GM12878 (cell line): ENCODE measurements at regions of chr1 and their contacts with region 1.

Region 1: DNA sequence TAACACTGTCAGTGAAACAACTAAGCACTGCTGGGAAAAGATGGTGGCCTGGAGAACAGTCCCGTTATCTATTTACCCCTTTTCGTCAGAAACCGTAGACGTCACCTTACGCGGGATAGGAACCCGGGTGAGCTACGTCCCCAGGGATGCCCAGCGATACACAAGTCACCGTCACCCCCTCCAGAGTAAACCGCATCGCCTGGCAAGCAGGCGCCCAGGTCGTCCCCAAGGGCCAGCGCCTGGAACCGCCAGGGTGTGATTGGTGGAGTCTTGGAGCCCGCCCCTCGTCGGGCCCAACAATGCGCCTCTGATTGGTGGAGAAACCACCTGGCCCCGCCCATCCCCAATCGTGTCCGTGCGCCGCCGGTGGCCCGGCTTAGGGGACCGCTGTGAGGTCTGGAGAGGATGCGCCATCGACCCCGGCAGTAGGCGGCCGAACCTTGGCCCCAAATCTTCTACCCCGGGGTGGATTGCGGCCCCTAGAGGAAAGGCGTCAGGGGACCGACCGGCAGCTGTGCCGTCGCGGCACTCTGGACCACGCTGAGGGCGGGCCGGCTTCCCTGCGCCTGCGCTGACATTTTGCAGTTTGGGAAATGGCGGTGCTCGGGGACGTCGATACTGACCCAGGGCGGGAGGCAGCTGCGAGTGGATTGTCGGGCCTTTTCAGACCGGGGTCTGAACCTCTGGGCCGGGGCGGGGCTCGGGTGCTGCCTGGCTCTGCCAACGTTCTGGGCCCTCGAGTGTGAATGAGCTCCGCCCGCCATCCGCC is 34.4 kb downstream of the SLC2A1 start:
- DNase-seq: peak; percentile 72
- ATAC-seq: peak; percentile 95
- H3K4me3 ChIP-seq: peak overlapping the region; percentile 71
- H3K27ac ChIP-seq: peak overlapping the region; percentile 78
- H3K4me1 ChIP-seq: peaks cover 9% of the 10 kb centered on the region
- H3K27me3 ChIP-seq: no peaks in the 10 kb centered on the region
- CTCF ChIP-seq: peak; percentile 4 to 17 (median 5); a peak in 2 of 6 replicates
- EP300 ChIP-seq: peak in 1 of 2 experiments; percentile 30; a peak in 1 of 4 replicates
- POLR2A ChIP-seq: peak; percentile 87
- RAD21 ChIP-seq: no peak

Region 2: GRCh38 chr1:42777852-42778251 is 146.4 kb before region 1 on chr1:
- CTCF ChIA-PET with region 1: interaction called, 18 read pairs
- POLR2A ChIA-PET with region 1: no interaction called
- RAD21 ChIA-PET with region 1: interaction called, 16 read pairs
- SMC1A ChIA-PET with region 1: interaction called, 21 read pairs
- in situ Hi-C with region 1: no loop called
- intact Hi-C with region 1: no loop called
- DNase-seq: no peak
- ATAC-seq: peak; percentile 77
- H3K4me3 ChIP-seq: no peak overlapping the region
- H3K27ac ChIP-seq: no peak overlapping the region
- H3K4me1 ChIP-seq: peaks cover 5% of the 10 kb centered on the region; the same call in 1 of the 2 replicates
- H3K27me3 ChIP-seq: no peaks in the 10 kb centered on the region
- CTCF ChIP-seq: peak; percentile 69 to 76 (median 71)
- EP300 ChIP-seq: no peak
- POLR2A ChIP-seq: no peak
- RAD21 ChIP-seq: peak; percentile 85

Region 3: DNA sequence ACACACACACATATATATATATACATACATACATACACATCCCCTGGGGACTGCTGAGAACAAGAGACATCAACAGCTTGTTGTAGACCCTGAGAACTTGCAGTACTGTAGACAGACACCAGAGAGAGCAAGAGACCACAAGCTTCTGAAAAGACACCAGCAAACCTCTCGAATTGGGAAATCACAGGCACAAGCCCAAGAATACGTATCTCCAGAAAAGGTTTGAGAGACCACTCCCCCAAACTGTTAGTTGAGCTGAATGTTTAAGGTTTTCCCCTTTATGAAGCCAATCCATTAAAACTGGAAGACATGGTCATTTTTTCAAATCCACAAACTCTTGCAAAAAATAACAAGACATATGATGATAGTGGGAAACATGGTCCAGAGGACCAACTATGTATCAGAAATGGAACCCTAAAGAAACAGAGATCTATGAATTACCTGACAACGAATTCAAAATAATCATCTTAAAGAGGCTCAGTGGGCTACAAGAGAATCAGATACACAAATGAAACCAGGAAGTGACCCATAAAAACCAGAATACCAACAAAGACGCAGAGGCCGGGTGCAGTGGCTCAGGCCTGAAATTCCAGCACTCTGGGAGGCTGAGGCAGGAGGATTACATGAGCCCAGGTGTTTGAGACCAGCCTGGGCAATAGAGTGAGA is 10.7 kb before region 1 on chr1:
- CTCF ChIA-PET with region 1: interaction called, 27 read pairs
- POLR2A ChIA-PET with region 1: no interaction called
- RAD21 ChIA-PET with region 1: interaction called, 36 read pairs
- SMC1A ChIA-PET with region 1: interaction called, 29 read pairs
- in situ Hi-C with region 1: no loop called
- intact Hi-C with region 1: no loop called
- DNase-seq: peak; percentile 64
- ATAC-seq: peak; percentile 88
- H3K4me3 ChIP-seq: no peak overlapping the region
- H3K27ac ChIP-seq: no peak overlapping the region
- H3K4me1 ChIP-seq: no peaks in the 10 kb centered on the region
- H3K27me3 ChIP-seq: no peaks in the 10 kb centered on the region
- CTCF ChIP-seq: peak; percentile 72 to 76 (median 74)
- EP300 ChIP-seq: no peak
- POLR2A ChIP-seq: no peak
- RAD21 ChIP-seq: peak; percentile 91

Region 4: DNA sequence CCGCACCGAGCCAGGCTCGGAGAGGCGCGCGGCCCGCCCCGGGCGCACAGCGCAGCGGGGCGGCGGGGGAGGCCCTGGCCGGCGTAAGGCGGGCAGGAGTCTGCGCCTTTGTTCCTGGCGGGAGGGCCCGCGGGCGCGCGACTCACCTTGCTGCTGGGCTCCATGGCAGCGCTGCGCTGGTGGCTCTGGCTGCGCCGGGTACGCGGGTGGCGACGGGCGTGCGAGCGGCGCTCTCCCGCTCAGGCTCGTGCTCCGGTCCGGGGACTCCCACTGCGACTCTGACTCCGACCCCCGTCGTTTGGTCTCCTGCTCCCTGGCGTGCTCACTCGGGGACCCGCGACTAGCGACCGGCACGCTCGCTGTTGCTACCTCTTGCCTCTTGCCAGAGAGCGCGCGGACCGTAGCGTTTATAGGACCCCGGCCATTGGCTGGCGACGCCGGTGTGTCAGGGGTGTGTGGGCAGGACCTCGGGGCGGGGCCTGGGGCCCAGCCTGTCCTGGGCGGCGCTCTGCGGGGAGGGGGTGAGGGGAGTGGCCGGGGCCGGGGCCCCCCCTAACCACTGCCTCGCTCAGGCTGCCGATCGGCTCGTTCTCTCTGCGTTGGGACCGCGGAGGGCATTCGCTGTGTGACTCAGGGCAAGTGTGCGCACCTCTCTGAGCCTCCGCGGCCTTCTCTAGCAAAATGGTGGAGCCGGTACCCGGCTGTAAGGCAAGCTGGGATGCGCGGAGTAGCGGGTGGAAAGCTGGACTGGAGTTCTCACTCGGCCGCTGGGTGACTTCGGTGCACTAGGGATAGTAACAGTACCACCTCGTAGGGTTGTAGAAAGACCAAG is 34.4 kb after region 1 on chr1 and contains the start of gene SLC2A1:
- CTCF ChIA-PET with region 1: interaction called, 13 read pairs
- POLR2A ChIA-PET with region 1: interaction called, 9 read pairs
- RAD21 ChIA-PET with region 1: interaction called, 15 read pairs
- SMC1A ChIA-PET with region 1: interaction called, 54 read pairs
- in situ Hi-C with region 1: loop called (anchors 5 kb)
- intact Hi-C with region 1: loop called (anchors 5 kb)
- DNase-seq: peak; percentile 79
- ATAC-seq: peak; percentile 88
- H3K4me3 ChIP-seq: peak within 1 kb of the TSS; percentile 88
- H3K27ac ChIP-seq: peak within 1 kb of the TSS; percentile 78
- H3K4me1 ChIP-seq: peaks cover 38% of the 10 kb centered on the region
- H3K27me3 ChIP-seq: no peaks in the 10 kb centered on the region
- CTCF ChIP-seq: no peak; a peak in 1 of 6 replicates
- EP300 ChIP-seq: peak in 1 of 2 experiments; percentile 14; a peak in 1 of 4 replicates
- POLR2A ChIP-seq: peak; percentile 100
- RAD21 ChIP-seq: no peak
- polyA plus RNA-seq, gene SLC2A1: 5.7 to 8.2 TPM

Region 5: GRCh38 chr1:43067977-43068751 is 143.9 kb after region 1 on chr1:
- CTCF ChIA-PET with region 1: interaction called, 383 read pairs
- POLR2A ChIA-PET with region 1: interaction called, 21 read pairs
- RAD21 ChIA-PET with region 1: interaction called, 198 read pairs
- SMC1A ChIA-PET with region 1: interaction called, 602 read pairs
- in situ Hi-C with region 1: loop called (anchors 5 kb)
- intact Hi-C with region 1: loop called (anchors 1 kb)
- DNase-seq: no peak
- ATAC-seq: no peak; the same call in 1 of the 3 replicates
- H3K4me3 ChIP-seq: no peak overlapping the region
- H3K27ac ChIP-seq: no peak overlapping the region
- H3K4me1 ChIP-seq: peaks cover 5% of the 10 kb centered on the region; the same call in 1 of the 2 replicates
- H3K27me3 ChIP-seq: peaks cover 0 to 3% of the 10 kb centered on the region in 2 experiments; a peak in 1 of 4 replicates
- CTCF ChIP-seq: no peak
- EP300 ChIP-seq: no peak
- POLR2A ChIP-seq: no peak
- RAD21 ChIP-seq: no peak